ENCODE measurements at regions of chr6 and their contacts with region 1.

Region 1: DNA sequence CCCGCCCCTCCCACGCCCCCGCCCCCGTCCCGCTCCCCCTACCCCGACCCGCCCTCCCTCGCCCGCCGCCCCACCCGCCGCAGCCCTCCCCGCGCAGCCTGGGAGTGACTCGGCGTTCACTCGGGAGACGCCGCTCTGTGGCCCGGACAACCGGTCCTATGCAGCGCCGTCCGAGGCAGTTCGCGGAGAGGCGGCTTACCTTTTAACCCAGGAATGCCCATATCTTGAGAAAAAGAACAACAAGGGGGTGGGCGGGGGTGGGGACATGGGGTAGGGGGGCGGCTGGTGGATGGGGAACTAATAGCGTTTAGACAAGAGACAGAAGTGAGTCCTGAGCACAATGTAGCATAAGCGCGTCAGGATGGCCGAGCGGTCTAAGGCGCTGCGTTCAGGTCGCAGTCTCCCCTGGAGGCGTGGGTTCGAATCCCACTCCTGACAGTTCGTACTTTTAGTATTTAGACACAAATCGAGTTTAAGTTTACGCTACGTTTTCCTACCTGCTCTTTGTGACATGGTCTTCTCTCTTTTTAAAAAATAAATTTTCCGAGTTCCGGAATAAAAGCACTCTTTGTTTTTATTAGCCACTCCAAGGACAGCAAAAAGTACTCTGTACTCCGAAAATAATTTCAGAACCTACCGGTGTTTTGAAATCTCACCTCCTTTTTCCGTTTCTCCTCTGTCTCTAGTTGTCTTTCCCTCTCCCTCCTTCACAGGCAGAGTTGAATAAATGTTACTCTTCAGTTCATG is 17.1 kb upstream of the HMGN4 start:
- DNase-seq: peak; percentile 91
- ATAC-seq: peak; percentile 80
- H3K4me3 Mint-ChIP-seq: peak overlapping the region; percentile 80
- H3K27ac Mint-ChIP-seq: peak overlapping the region; percentile 93
- H3K4me1 Mint-ChIP-seq: peaks cover 30% of the 10 kb centered on the region
- H3K27me3 Mint-ChIP-seq: peaks cover 2% of the 10 kb centered on the region

Region 2: DNA sequence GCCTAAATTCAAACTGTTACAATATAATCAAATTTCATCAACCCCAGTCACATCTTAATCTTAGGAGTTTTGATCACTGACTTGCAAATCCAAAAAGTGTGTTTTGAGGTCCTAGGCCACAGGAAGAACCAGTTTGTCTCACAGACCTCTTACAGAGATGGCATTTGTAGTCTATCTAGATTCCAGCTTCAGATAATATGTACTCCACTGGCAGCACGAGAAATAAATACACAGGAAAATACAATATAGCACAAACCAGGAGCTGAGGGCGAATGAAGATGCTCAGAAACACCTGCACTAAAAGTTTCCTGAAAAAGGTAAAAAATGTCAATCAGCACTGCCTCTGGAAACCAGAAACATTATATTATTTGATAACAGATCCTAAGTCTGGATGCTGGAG is 81.4 kb before region 1 on chr6:
- CTCF ChIA-PET with region 1: no interaction called
- POLR2A ChIA-PET with region 1: no interaction called
- DNase-seq: no peak
- ATAC-seq: no peak
- H3K4me3 Mint-ChIP-seq: peak overlapping the region; percentile 86
- H3K27ac Mint-ChIP-seq: peak overlapping the region; percentile 93
- H3K4me1 Mint-ChIP-seq: peaks cover 35% of the 10 kb centered on the region
- H3K27me3 Mint-ChIP-seq: no peaks in the 10 kb centered on the region

Region 3: GRCh38 chr6:26532699-26533531 is 11.9 kb after region 1 on chr6:
- CTCF ChIA-PET with region 1: interaction called, 5 read pairs
- POLR2A ChIA-PET with region 1: interaction called, 17 read pairs
- DNase-seq: peak; percentile 95
- ATAC-seq: peak; percentile 38
- H3K4me3 Mint-ChIP-seq: peak overlapping the region; percentile 88
- H3K27ac Mint-ChIP-seq: peak overlapping the region; percentile 85
- H3K4me1 Mint-ChIP-seq: peaks cover 40% of the 10 kb centered on the region
- H3K27me3 Mint-ChIP-seq: peaks cover 2% of the 10 kb centered on the region

Region 4: GRCh38 chr6:26537846-26538571 is 17.0 kb after region 1 on chr6 and contains the start of gene HMGN4:
- CTCF ChIA-PET with region 1: interaction called, 5 read pairs
- POLR2A ChIA-PET with region 1: interaction called, 17 read pairs
- DNase-seq: peak; percentile 88
- ATAC-seq: peak; percentile 71
- H3K4me3 Mint-ChIP-seq: peak within 1 kb of the TSS; percentile 87
- H3K27ac Mint-ChIP-seq: peak within 1 kb of the TSS; percentile 99
- H3K4me1 Mint-ChIP-seq: peaks cover 58% of the 10 kb centered on the region
- H3K27me3 Mint-ChIP-seq: peaks cover 2% of the 10 kb centered on the region
- total RNA-seq, gene HMGN4: 80.8 to 84.9 TPM